CD4-positive, alpha-beta T cell (primary cell): ENCODE measurements at regions of chr19 and their contacts with region 1.

Region 1: DNA sequence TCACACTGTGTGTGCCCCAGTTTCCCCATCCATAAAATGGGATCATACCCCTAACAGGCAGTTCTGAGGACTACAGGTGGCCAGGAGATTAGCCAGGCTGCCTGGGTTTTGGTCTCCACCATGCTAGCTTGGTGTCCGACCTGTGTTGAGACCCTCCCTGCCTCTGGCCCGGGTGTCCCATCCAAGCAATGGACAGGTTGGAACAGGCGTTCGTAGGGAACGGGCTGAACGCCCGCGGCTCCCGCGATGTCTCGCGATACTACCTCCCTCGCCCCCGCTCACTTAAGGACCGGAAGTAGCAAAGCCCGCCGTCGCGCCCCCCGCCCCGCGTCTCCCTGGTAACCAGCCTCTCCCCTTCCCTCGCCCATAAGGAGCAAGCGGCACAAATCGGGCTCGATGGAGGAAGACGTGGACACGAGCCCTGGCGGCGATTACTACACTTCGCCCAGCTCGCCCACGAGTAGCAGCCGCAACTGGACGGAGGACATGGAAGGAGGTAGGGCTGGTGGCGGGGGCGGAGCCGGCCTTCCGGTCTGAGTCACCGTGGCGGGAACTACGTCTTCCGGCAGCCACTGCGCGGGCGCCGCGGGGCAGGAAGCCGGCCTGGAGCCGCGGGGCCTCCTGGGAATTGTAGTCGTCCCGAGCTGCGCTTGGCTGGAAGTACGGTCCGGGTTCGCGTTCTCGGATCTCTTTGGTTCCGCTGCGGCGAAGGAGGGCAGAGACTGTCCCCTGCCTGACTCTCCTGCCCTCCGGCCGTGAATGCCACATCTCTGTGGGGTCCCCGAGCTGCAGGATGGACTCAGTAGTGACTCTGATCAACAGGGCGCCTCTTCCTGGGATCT is 45.4 kb downstream of the SMIM24 start:
- DNase-seq: peak; percentile 88 to 97 (median 94)
- ATAC-seq: peak; percentile 94
- H3K4me3 ChIP-seq: peak overlapping the region; percentile 79
- H3K4me3 Mint-ChIP-seq: peak overlapping the region; percentile 97
- H3K27ac ChIP-seq: peak overlapping the region; percentile 92 to 94
- H3K27ac Mint-ChIP-seq: peak overlapping the region; percentile 95
- H3K4me1 ChIP-seq: peaks cover 17% of the 10 kb centered on the region
- H3K4me1 Mint-ChIP-seq: peaks cover 17% of the 10 kb centered on the region
- H3K27me3 ChIP-seq: no peaks in the 10 kb centered on the region
- H3K27me3 Mint-ChIP-seq: no peaks in the 10 kb centered on the region
- CTCF ChIP-seq: no peak

Region 2: GRCh38 chr19:3185482-3186376 is 249.2 kb before region 1 on chr19 and contains the start of gene NCLN:
- CTCF ChIA-PET with region 1: no interaction called
- POLR2A ChIA-PET with region 1: no interaction called
- intact Hi-C with region 1: loop called in 1 of 2 experiments (anchors 10 kb)
- DNase-seq: peak; percentile 88 to 96 (median 94)
- ATAC-seq: peak; percentile 82
- H3K4me3 ChIP-seq: peak within 1 kb of the TSS; percentile 59
- H3K4me3 Mint-ChIP-seq: peak within 1 kb of the TSS; percentile 93
- H3K27ac ChIP-seq: peak within 1 kb of the TSS; percentile 62
- H3K27ac Mint-ChIP-seq: peak within 1 kb of the TSS; percentile 86
- H3K4me1 ChIP-seq: peaks cover 92% of the 10 kb centered on the region
- H3K4me1 Mint-ChIP-seq: peaks cover 57% of the 10 kb centered on the region
- H3K27me3 ChIP-seq: no peaks in the 10 kb centered on the region
- H3K27me3 Mint-ChIP-seq: no peaks in the 10 kb centered on the region
- CTCF ChIP-seq: no peak
- total RNA-seq, gene NCLN: 49.6 to 51.9 TPM

Region 3: GRCh38 chr19:3500429-3501130 is 65.6 kb after region 1 on chr19 and contains the start of gene DOHH:
- CTCF ChIA-PET with region 1: interaction called, 4 read pairs
- POLR2A ChIA-PET with region 1: no interaction called
- intact Hi-C with region 1: loop called in 1 of 2 experiments (anchors 5 kb)
- DNase-seq: peak; percentile 93 to 98 (median 95)
- ATAC-seq: peak; percentile 85
- H3K4me3 ChIP-seq: peak within 1 kb of the TSS; percentile 98
- H3K4me3 Mint-ChIP-seq: peak within 1 kb of the TSS; percentile 84
- H3K27ac ChIP-seq: peak within 1 kb of the TSS; percentile 85 to 97
- H3K27ac Mint-ChIP-seq: peak within 1 kb of the TSS; percentile 85
- H3K4me1 ChIP-seq: peaks cover 41% of the 10 kb centered on the region
- H3K4me1 Mint-ChIP-seq: peaks cover 31% of the 10 kb centered on the region
- H3K27me3 ChIP-seq: no peaks in the 10 kb centered on the region
- H3K27me3 Mint-ChIP-seq: no peaks in the 10 kb centered on the region
- CTCF ChIP-seq: no peak
- total RNA-seq, gene DOHH: 3.9 to 4.7 TPM